ENCODE measurements at regions of chr20 and their contacts with region 1.

Region 1: GRCh38 chr20:3888622-3889488 is at the start of gene PANK2:
- DNase-seq: peak; percentile 99
- ATAC-seq: peak; percentile 95 to 96
- H3K4me3 ChIP-seq: peak within 1 kb of the TSS; percentile 92 to 100 (median 96)
- H3K27ac ChIP-seq: peak within 1 kb of the TSS; percentile 87 to 97 (median 91)
- H3K4me1 ChIP-seq: peaks cover 40 to 41% of the 10 kb centered on the region in 2 donors
- H3K27me3 ChIP-seq: no peaks in the 10 kb centered on the region
- CTCF ChIP-seq: peak; percentile 36 to 58 (median 48)
- POLR2A ChIP-seq: peak; percentile 92 to 93
- total RNA-seq, gene PANK2: 18.2 to 25.8 (median 23.5) TPM

Region 2: GRCh38 chr20:3820048-3820900 is 68.6 kb before region 1 on chr20 and contains the start of gene AP5S1:
- in situ Hi-C with region 1: no loop called
- intact Hi-C with region 1: loop called (anchors 2 kb)
- DNase-seq: peak; percentile 96 to 98
- ATAC-seq: peak; percentile 87 to 92
- H3K4me3 ChIP-seq: peak within 1 kb of the TSS; percentile 64 to 75 (median 66)
- H3K27ac ChIP-seq: peak within 1 kb of the TSS; percentile 89 to 98 (median 96)
- H3K4me1 ChIP-seq: peaks cover 19 to 23% of the 10 kb centered on the region in 2 donors
- H3K27me3 ChIP-seq: no peaks in the 10 kb centered on the region
- CTCF ChIP-seq: peak; percentile 92 to 100 (median 100)
- POLR2A ChIP-seq: peak; percentile 43 to 60
- total RNA-seq, gene AP5S1: 11.6 to 20.9 (median 17.3) TPM

Region 3: GRCh38 chr20:3846740-3847428 is 42.0 kb before region 1 on chr20 and contains the start of gene MAVS:
- in situ Hi-C with region 1: no loop called
- intact Hi-C with region 1: loop called (anchors 1 kb)
- DNase-seq: peak; percentile 79 to 88
- ATAC-seq: peak; percentile 90 to 95
- H3K4me3 ChIP-seq: peak within 1 kb of the TSS; percentile 75 to 98 (median 84)
- H3K27ac ChIP-seq: peak within 1 kb of the TSS; percentile 95 to 98 (median 96)
- H3K4me1 ChIP-seq: peaks cover 9 to 13% of the 10 kb centered on the region in 2 donors
- H3K27me3 ChIP-seq: no peaks in the 10 kb centered on the region
- CTCF ChIP-seq: peak in 1 of 5 experiments; percentile 13
- POLR2A ChIP-seq: peak; percentile 84 to 85
- total RNA-seq, gene MAVS: 37.9 to 64.5 (median 44.4) TPM

Region 4: DNA sequence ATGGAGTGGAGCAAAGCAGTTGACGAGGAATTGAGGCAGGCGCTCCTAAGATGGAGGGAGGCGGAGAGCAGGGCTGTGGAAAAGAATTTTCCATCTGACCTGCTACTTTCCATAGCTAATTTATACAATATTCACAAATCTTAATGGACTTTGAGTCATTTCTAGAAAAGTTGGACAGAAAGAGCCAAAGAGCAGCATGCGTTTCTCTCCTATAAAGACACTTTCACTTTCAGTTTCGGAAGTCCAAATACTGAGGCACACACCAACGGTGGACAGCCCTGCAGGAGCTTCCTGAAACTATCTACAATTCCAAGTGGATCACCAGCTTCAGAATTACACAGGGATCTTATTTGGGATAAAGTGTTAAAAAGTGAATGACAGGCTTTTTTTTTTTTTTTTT is 43.8 kb after region 1 on chr20:
- in situ Hi-C with region 1: no loop called
- intact Hi-C with region 1: loop called (anchors 5 kb)
- DNase-seq: no peak
- ATAC-seq: peak in 1 of 2 donors; percentile 33
- H3K4me3 ChIP-seq: peak overlapping the region; percentile 54 to 70 (median 64)
- H3K27ac ChIP-seq: peak overlapping the region; percentile 68 to 76 (median 72)
- H3K4me1 ChIP-seq: peaks cover 45 to 48% of the 10 kb centered on the region in 2 donors
- H3K27me3 ChIP-seq: no peaks in the 10 kb centered on the region
- CTCF ChIP-seq: no peak
- POLR2A ChIP-seq: no peak

Region 5: GRCh38 chr20:4014031-4014474 is 125.2 kb after region 1 on chr20:
- in situ Hi-C with region 1: no loop called
- intact Hi-C with region 1: loop called (anchors 2 kb)
- DNase-seq: no peak
- ATAC-seq: peak; percentile 35 to 65
- H3K4me3 ChIP-seq: peak overlapping the region in 3 of 4 donors; percentile 72 to 88 (median 76)
- H3K27ac ChIP-seq: peak overlapping the region in 1 of 4 donors; percentile 69
- H3K4me1 ChIP-seq: peaks cover 6 to 7% of the 10 kb centered on the region in 2 donors
- H3K27me3 ChIP-seq: no peaks in the 10 kb centered on the region
- CTCF ChIP-seq: peak in 4 of 5 experiments; percentile 13 to 44 (median 28)
- POLR2A ChIP-seq: no peak

Region 6: DNA sequence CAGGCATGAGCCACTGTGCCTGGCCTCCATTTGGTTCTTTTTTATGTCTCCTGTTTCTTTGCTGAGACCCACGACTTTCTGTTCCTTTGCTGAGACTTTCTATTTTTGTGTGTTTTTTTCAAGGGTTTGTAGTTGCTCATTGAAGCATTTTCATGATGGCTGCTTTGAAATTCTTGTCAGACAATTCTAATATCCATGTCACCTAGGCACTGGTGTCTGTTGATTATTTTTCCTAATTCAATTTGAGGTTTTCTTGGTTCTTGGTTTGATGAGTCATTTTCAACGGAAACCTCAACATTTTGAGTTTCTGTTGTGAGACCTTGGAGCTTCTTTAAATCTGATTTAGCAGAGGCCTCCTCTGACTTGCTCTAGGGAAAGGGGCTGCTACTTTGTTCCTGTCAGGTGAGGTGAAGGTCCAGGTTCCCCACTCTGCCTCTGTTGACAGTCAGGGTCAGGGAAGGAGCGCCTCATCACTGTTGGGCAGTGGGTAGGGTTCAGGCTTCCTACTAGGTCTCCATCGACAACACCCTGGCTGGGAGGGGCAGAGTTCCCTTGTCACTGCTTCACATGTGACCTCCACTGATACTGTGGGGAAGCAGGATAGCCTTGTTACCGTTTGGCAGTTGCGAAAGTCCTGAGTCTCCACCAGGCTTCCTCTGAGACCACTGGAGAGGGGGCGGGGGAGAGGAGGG is 193.7 kb after region 1 on chr20:
- in situ Hi-C with region 1: loop called (anchors 10 to 25 kb)
- intact Hi-C with region 1: loop called (anchors 1 kb)
- DNase-seq: peak in 1 of 2 donors; percentile 36
- ATAC-seq: no peak
- H3K4me3 ChIP-seq: no peak overlapping the region
- H3K27ac ChIP-seq: peak overlapping the region in 1 of 4 donors; percentile 40
- H3K4me1 ChIP-seq: no peaks in the 10 kb centered on the region
- H3K27me3 ChIP-seq: no peaks in the 10 kb centered on the region
- CTCF ChIP-seq: no peak
- POLR2A ChIP-seq: no peak

Region 7: GRCh38 chr20:4091490-4092479 is 202.9 kb after region 1 on chr20:
- in situ Hi-C with region 1: loop called (anchors 10 to 25 kb)
- intact Hi-C with region 1: no loop called
- DNase-seq: no peak
- ATAC-seq: peak in 1 of 2 donors; percentile 55
- H3K4me3 ChIP-seq: no peak overlapping the region
- H3K27ac ChIP-seq: no peak overlapping the region
- H3K4me1 ChIP-seq: no peaks in the 10 kb centered on the region
- H3K27me3 ChIP-seq: no peaks in the 10 kb centered on the region
- CTCF ChIP-seq: peak in 2 of 5 experiments; percentile 50 to 66
- POLR2A ChIP-seq: no peak

Measured in gastrocnemius medialis (tissue), 4 donors.